ENCODE measurements at regions of chr17 and their contacts with region 1.

Region 1: DNA sequence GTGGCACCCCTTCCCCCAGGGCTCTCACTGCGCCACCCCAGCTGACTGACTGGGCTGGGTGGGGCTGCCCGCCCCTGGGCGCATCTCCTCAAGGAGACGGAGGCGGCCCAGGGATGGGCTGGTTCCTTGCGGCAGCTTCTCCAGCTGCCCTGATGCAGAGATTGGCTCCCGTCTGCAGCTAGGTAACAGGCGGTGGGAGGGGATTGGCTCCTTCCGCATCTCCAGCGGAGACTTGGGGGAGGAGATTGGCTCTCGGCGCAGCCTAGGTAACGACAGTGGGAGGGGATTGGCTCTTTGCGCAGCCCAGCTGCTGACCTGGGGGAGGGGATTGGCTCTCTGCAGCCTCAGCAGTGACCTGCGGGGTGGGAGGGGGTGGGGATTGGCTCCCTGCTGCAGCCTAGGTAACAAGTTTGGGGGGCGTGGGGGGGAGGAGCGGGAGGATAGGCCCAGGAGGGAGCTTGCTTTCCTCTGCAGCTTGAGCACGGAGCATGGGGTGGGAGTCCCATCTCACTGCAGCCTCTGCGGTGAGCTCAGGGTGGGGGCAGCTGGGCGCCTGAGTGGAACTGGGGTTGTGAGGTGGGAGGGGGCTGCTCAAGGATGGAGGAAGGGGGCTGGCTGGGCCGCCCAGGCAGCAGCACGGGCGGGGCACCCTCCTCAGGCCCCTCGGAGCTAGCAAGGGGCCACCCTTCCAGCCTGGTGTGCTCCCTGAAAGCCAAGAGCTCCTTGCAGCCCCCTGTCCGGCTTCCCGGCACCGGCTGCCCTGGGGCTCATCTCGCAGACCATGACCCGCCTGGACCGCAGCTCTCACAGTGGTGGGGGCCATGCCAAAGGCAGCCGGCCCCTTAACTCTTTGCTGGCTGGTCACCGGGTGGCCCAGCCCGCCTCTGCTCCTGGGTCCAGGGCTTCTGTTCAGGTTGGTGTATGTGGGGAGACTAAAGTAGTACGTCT is 6.4 kb downstream of the NFE2L1 start:
- DNase-seq: peak; percentile 96
- ATAC-seq: peak; percentile 91
- H3K4me3 Mint-ChIP-seq: peak overlapping the region; percentile 85
- H3K27ac Mint-ChIP-seq: peak overlapping the region; percentile 99
- H3K4me1 Mint-ChIP-seq: peaks cover 73% of the 10 kb centered on the region
- H3K27me3 Mint-ChIP-seq: no peaks in the 10 kb centered on the region
- CTCF ChIP-seq: no peak

Region 2: GRCh38 chr17:48107168-48108132 is 52.9 kb after region 1 on chr17 and contains the start of gene SNX11:
- CTCF ChIA-PET with region 1: no interaction called
- POLR2A ChIA-PET with region 1: interaction called, 20 read pairs
- DNase-seq: peak; percentile 97
- ATAC-seq: peak; percentile 96
- H3K4me3 Mint-ChIP-seq: peak within 1 kb of the TSS; percentile 89
- H3K27ac Mint-ChIP-seq: peak within 1 kb of the TSS; percentile 83
- H3K4me1 Mint-ChIP-seq: peaks cover 11% of the 10 kb centered on the region
- H3K27me3 Mint-ChIP-seq: peaks cover 8% of the 10 kb centered on the region; the same call in 1 of the 2 replicates
- CTCF ChIP-seq: no peak
- total RNA-seq, gene SNX11: 19.3 to 24.5 TPM (median 20.1 TPM) in 3 replicates